ENCODE measurements at regions of chr20 and their contacts with region 1.

Region 1: GRCh38 chr20:63864847-63865640 is at the start of gene TPD52L2:
- DNase-seq: peak; percentile 98 to 99 (median 99)
- H3K4me3 ChIP-seq: peak within 1 kb of the TSS; percentile 59 to 95 (median 89)
- H3K27ac ChIP-seq: peak within 1 kb of the TSS; percentile 70 to 93
- H3K4me1 ChIP-seq: peaks cover 0 to 58% (median 41%) of the 10 kb centered on the region in 4 experiments
- H3K27me3 ChIP-seq: no peaks in the 10 kb centered on the region

Region 2: DNA sequence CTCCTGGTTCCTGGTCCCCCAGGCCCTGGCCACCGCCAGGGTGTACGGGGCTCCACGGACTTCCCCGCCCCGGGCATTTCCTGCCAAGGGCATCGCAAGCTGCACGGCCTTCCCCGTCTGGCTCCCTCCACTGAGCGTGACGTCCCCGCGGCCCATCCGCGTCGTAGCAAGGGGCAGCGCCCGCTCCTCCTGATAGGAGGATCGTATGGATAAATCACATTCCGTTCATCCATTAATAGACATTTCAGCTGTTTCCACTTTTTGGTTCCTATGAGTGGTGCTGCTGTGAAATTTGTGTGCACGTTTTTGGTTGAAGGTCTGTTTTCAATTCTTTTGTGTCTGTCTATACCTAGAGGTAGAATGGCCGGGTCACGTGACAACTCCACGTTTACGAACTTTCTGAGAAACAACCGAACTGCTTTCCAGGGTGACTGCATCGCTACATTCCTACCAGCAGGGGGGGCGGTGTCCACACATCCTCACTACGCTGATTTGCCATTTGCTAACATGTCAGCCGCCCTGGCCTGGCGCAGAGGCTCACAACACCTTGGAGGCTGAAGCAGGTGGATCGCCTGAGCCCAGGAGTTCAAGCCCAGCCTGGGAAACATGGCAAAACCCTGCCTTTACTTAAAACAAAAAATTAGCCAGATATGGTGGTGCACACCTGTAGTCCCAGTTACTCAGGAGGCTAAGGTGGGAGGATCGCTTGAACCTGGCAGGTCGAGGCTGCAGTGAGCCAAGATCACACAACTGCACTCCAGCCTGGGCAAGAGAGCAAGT is 430.3 kb before region 1 on chr20:
- CTCF ChIA-PET with region 1: no interaction called
- POLR2A ChIA-PET with region 1: no interaction called
- DNase-seq: peak; percentile 85 to 91 (median 89)
- H3K4me3 ChIP-seq: peak overlapping the region in 1 of 7 experiments; percentile 54
- H3K27ac ChIP-seq: no peak overlapping the region
- H3K4me1 ChIP-seq: peaks cover 0 to 10% (median 6%) of the 10 kb centered on the region in 4 experiments
- H3K27me3 ChIP-seq: peaks cover 0 to 4% (median 0%) of the 10 kb centered on the region in 5 experiments

Region 3: DNA sequence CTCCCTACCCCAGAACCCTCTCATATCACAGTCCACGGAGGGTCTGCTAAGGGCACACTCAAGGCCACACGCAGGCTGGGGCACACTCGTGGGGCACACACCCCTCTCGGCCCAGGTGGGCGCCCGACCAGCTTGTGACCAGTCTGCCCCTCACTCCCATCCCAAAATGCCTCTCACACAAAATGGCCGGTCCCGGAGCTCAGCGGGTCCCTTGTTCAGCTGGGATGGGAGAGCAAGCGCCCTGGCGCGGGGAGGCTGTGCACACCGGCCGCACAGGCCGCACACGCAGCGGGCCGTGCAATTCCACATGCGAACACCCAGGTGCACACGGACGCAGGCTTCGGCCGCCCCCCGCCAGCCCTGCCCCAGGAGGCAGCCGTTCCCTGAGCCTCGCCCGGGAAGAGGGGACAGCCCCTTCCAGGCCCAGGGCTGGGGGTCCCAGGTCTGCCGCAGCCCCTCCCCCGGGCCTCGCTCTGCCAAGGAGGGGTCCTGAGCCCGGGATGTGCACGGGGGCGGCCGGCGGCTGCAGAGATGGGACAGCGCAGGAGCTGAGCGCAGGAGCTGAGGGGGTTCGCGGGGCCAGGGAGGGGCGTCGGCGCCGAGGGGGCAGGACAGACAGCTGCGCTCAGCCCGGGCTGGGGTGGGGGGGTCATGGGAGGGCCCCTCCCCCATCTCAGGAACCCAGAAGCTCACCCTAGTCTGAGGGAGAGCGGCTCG is 393.9 kb before region 1 on chr20:
- CTCF ChIA-PET with region 1: no interaction called
- POLR2A ChIA-PET with region 1: no interaction called
- DNase-seq: no peak
- H3K4me3 ChIP-seq: no peak overlapping the region
- H3K27ac ChIP-seq: no peak overlapping the region
- H3K4me1 ChIP-seq: peaks cover 0 to 16% (median 9%) of the 10 kb centered on the region in 4 experiments
- H3K27me3 ChIP-seq: peaks cover 0 to 95% (median 29%) of the 10 kb centered on the region in 5 experiments

Region 4: DNA sequence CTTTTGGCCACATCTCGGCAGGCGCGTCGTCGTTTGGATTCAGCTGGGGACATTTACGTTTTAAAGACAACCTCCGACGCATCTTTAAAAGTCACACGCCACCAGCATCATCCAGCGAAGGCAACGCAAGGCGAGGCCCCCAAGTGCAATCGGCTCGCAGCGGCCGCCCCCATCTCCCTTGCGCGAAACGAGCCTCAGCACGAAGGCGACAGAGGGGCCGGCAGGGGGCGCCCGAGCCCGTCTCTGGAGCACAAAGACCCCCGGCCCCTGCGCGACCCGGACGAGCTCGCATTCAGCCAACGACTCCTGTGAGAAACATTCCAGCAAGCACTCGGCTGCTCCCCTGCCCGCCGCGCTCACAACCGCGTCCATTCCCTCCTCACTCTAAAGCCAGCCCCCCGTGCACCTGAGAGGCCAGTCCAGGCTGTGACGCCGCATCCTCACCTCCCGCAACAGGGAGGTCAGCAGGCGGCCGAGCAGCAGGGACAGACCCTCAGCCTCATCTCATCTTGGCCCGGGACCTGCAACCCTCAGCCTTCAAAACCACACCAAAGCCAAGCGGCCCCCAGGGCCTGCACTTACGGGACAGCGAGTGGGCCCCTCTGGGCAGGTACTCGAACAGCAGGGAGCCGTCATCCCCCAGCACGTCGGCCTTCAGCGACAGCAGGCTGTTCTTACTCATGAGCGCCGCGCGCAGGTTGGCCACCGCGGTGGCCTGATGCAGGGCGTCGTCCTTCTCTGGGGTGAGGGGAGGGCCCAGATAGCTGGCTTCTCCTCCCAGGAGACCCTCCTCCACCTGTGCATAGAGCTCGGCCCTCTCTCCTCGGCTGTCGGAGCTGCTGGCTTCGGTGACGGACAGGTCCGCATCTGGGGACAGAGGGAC is 89.7 kb before region 1 on chr20:
- CTCF ChIA-PET with region 1: interaction called, 10 read pairs
- POLR2A ChIA-PET with region 1: interaction called, 3 read pairs
- DNase-seq: peak; percentile 42 to 63 (median 61)
- H3K4me3 ChIP-seq: peak overlapping the region in 2 of 7 experiments; percentile 16 to 19
- H3K27ac ChIP-seq: no peak overlapping the region
- H3K4me1 ChIP-seq: peaks cover 0 to 10% (median 5%) of the 10 kb centered on the region in 4 experiments
- H3K27me3 ChIP-seq: no peaks in the 10 kb centered on the region

Region 5: GRCh38 chr20:63854069-63854765 is 10.8 kb before region 1 on chr20:
- CTCF ChIA-PET with region 1: interaction called, 12 read pairs
- POLR2A ChIA-PET with region 1: interaction called, 3 read pairs
- DNase-seq: peak in 2 of 3 donors; percentile 73 to 74
- H3K4me3 ChIP-seq: peak overlapping the region in 4 of 7 experiments; percentile 1 to 59 (median 46)
- H3K27ac ChIP-seq: peak overlapping the region in 1 of 2 experiments; percentile 61
- H3K4me1 ChIP-seq: peaks cover 0 to 71% (median 66%) of the 10 kb centered on the region in 4 experiments
- H3K27me3 ChIP-seq: no peaks in the 10 kb centered on the region

Region 6: GRCh38 chr20:63877755-63878470 is 12.9 kb after region 1 on chr20:
- CTCF ChIA-PET with region 1: interaction called, 13 read pairs
- POLR2A ChIA-PET with region 1: interaction called, 5 read pairs
- DNase-seq: no peak
- H3K4me3 ChIP-seq: no peak overlapping the region
- H3K27ac ChIP-seq: no peak overlapping the region
- H3K4me1 ChIP-seq: peaks cover 0 to 8% (median 6%) of the 10 kb centered on the region in 4 experiments
- H3K27me3 ChIP-seq: no peaks in the 10 kb centered on the region